Heart left ventricle (tissue), 16 donors: ENCODE measurements at regions of chr9 and their contacts with region 1.

Region 1: DNA sequence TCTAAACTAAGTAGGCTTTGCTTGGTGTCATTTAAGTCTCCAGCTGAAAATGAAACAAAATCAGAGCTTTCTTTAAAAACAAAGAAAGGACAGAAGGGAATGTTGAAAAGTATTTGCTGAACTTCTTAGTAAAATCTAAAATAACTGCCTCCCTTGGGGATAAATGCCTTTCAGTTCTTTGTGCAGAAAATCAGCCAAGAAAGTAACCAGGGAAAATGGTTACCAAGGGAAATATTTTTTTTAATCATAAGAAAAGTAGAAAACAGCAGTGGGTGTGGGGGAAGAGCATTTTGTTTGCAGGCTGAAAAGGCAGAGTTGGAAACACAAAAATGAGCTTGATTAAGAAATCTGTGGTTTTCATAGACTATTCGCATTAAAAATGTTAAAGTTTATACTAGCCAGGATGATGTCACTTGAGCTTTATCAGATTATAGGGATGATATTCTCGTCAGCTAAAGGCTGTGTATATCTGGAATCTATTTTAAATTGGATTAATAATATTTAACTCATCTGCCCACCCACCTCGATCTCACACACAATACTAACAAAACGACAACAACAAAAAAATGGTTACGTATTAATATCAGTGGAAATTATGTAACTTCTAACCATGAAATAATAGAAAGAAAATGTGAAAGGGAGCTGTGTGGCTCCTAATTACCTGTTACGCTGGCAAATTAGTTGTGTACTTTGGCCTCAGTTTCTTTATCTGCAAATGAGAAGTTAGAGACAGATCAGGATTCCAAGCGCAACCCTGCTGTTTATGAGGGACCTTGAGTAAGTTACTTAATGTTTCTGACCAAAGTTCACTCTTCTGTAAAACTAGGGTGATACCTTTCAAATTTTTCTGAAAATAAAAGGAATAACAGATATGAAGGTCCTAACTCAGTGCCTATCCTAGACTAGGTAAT is at the start of gene ECM2:
- DNase-seq: peak in 1 of 5 donors; percentile 26
- ATAC-seq: peak in 2 of 4 donors; percentile 65 to 70
- H3K4me3 ChIP-seq: peak within 1 kb of the TSS in 10 of 12 donors; percentile 18 to 56 (median 34)
- H3K27ac ChIP-seq: peak within 1 kb of the TSS; percentile 36 to 92 (median 66)
- H3K4me1 ChIP-seq: peaks cover 0 to 44% (median 0%) of the 10 kb centered on the region in 12 donors
- H3K27me3 ChIP-seq: no peaks in the 10 kb centered on the region
- CTCF ChIP-seq: no peak
- POLR2A ChIP-seq: no peak
- total RNA-seq, gene ECM2: 3.1 to 32.4 (median 10.1) TPM

Region 2: DNA sequence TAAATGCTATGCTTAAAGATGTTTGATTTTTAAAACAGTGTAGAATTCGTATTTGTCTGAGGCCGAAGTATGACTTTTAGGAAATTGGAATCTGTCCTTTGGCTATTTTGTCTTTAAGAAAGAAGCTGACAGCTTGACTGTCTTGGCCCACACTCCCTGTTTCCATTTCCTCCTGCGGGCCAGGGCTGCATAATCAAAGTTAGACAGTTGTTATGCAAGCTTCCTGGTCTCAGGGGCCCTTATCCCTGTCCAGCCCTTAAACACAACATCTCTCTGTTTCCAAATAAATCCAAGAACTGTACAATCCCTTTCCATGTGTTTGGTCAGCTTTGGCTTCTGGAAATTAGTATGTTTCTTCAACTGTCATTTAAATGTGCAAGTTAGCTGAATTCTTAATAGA is 54.2 kb after region 1 on chr9:
- intact Hi-C with region 1: loop called in 2 of 10 experiments (anchors 5 to 10 kb)
- DNase-seq: peak in 4 of 5 donors; percentile 75 to 85 (median 83)
- ATAC-seq: peak; percentile 91 to 98 (median 98)
- H3K4me3 ChIP-seq: no peak overlapping the region
- H3K27ac ChIP-seq: peak overlapping the region in 10 of 12 donors; percentile 2 to 71 (median 51)
- H3K4me1 ChIP-seq: peaks cover 0 to 42% (median 28%) of the 10 kb centered on the region in 12 donors
- H3K27me3 ChIP-seq: no peaks in the 10 kb centered on the region
- CTCF ChIP-seq: no peak
- POLR2A ChIP-seq: no peak

Region 3: GRCh38 chr9:92607773-92608172 is 71.6 kb after region 1 on chr9:
- intact Hi-C with region 1: loop called in 2 of 10 experiments (anchors 5 kb)
- DNase-seq: peak in 1 of 5 donors; percentile 52
- ATAC-seq: peak in 3 of 4 donors; percentile 3 to 23 (median 6)
- H3K4me3 ChIP-seq: no peak overlapping the region
- H3K27ac ChIP-seq: peak overlapping the region in 11 of 12 donors; percentile 23 to 94 (median 83)
- H3K4me1 ChIP-seq: peaks cover 0 to 55% (median 30%) of the 10 kb centered on the region in 12 donors
- H3K27me3 ChIP-seq: no peaks in the 10 kb centered on the region
- CTCF ChIP-seq: no peak
- POLR2A ChIP-seq: no peak